Ovary (tissue), 10 donors: ENCODE measurements at regions of chr17 and their contacts with region 1.

Region 1: DNA sequence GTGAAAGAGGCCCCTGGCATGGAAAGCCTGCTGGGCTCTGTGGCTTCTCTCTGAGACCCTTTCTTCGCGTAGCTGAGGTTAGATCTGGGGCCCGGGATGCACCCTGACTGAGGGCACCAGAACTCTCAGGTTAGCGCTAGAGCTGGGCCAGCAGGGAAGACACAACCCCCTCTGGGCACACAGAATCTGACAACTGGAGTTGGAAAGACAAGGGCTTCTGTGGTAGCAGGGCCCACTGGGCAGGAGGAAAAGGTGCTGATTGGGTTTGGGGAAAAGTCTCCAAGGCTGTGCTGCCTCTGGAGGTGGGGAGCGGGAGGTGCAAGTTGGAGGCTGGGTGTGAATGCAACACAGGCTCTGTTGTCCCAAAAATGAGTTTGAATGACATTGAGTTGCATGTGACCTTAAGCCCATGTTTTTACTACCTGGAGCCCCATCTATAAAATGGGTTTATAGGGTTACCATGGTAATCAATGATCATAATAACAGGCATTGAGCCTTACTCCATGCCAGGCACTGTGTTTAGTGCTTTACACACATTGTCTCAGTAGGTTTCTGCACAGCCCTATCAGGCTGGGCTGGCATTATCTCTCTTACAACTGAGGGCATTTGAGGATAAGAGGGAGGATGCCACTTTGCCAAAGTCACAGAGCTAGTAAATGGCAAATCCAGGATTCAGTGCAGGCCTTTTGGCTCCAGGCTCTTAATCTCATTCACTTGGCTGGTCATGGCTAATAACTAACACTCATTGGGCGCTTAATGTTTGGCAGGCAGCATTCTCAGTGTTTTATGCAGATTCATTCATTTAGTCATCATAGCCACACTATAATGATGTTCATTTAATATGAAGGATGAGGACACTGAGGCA is 9.5 kb upstream of the IGFBP4 start:
- DNase-seq: no peak
- H3K4me3 ChIP-seq: no peak overlapping the region
- H3K27ac ChIP-seq: no peak overlapping the region
- H3K4me1 ChIP-seq: no peaks in the 10 kb centered on the region
- H3K27me3 ChIP-seq: no peaks in the 10 kb centered on the region
- CTCF ChIP-seq: peak in 2 of 3 donors; percentile 8 to 20
- EP300 ChIP-seq: no peak
- POLR2A ChIP-seq: no peak

Region 2: GRCh38 chr17:40499551-40500174 is 65.9 kb after region 1 on chr17:
- intact Hi-C with region 1: loop called in 1 of 4 experiments (anchors 5 kb)
- DNase-seq: peak; percentile 82 to 90 (median 84)
- H3K4me3 ChIP-seq: no peak overlapping the region
- H3K27ac ChIP-seq: no peak overlapping the region
- H3K4me1 ChIP-seq: peaks cover 2% of the 10 kb centered on the region
- H3K27me3 ChIP-seq: no peaks in the 10 kb centered on the region
- CTCF ChIP-seq: no peak
- EP300 ChIP-seq: no peak
- POLR2A ChIP-seq: no peak

Region 3: DNA sequence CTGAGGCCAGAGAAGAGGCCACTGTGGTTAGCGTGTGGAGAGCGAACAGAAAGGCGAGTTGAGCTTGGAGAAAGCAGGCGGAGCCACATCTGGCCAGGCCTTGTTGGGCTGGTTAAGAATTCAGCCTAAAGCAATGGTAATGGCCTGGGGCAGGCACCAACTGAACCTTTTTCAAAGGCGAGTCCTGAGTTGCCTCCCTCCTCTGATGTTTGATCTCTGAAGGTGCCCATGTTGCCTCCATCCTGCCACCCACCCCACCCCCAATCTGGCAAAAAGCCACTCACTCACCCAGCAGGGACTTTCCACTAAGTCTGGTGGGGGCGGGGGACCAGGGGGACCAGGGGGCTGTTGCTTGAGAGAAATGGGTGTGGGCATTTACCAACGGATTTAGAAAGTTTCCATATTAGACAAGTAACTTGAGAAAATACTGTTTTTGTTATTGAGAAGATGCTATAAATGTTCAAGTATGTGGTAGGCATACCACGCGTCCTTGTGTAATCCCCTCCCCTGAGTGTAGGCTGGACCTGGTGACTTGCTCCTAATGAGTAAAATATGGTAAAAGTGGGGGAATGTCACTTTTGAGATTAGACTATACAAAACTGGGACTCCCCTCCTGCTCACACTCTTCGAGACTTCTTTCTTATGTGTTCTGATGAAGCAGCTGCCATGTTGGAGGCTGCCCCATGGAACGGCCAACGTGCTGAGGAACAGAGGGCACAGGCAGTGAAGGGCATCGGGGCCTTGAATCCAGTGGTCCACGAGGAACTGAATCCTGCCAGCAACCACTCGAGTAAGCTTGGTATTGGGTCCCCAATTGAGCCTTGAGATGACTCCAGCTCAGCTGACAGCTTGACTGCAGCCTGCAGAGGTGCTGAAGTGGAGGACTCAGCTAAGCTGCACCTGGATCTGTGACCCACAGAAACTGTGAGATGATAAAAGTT is 97.5 kb after region 1 on chr17:
- intact Hi-C with region 1: loop called in 1 of 4 experiments (anchors 5 kb)
- DNase-seq: peak in 3 of 5 donors; percentile 27 to 45 (median 38)
- H3K4me3 ChIP-seq: no peak overlapping the region
- H3K27ac ChIP-seq: no peak overlapping the region
- H3K4me1 ChIP-seq: peaks cover 13% of the 10 kb centered on the region
- H3K27me3 ChIP-seq: no peaks in the 10 kb centered on the region
- CTCF ChIP-seq: no peak
- EP300 ChIP-seq: no peak
- POLR2A ChIP-seq: no peak

Region 4: GRCh38 chr17:40582328-40582901 is 148.6 kb after region 1 on chr17:
- intact Hi-C with region 1: no loop called
- DNase-seq: no peak
- H3K4me3 ChIP-seq: no peak overlapping the region
- H3K27ac ChIP-seq: no peak overlapping the region
- H3K4me1 ChIP-seq: no peaks in the 10 kb centered on the region
- H3K27me3 ChIP-seq: no peaks in the 10 kb centered on the region
- CTCF ChIP-seq: no peak
- EP300 ChIP-seq: no peak
- POLR2A ChIP-seq: no peak

Region 5: GRCh38 chr17:40678902-40679522 is 245.2 kb after region 1 on chr17:
- intact Hi-C with region 1: no loop called
- DNase-seq: no peak
- H3K4me3 ChIP-seq: no peak overlapping the region
- H3K27ac ChIP-seq: no peak overlapping the region
- H3K4me1 ChIP-seq: no peaks in the 10 kb centered on the region
- H3K27me3 ChIP-seq: no peaks in the 10 kb centered on the region
- CTCF ChIP-seq: no peak
- EP300 ChIP-seq: no peak
- POLR2A ChIP-seq: no peak

Region 6: GRCh38 chr17:40967581-40967980 is 533.8 kb after region 1 on chr17:
- intact Hi-C with region 1: no loop called
- DNase-seq: no peak
- H3K4me3 ChIP-seq: no peak overlapping the region
- H3K27ac ChIP-seq: no peak overlapping the region
- H3K4me1 ChIP-seq: no peaks in the 10 kb centered on the region
- H3K27me3 ChIP-seq: no peaks in the 10 kb centered on the region
- CTCF ChIP-seq: no peak
- EP300 ChIP-seq: no peak
- POLR2A ChIP-seq: no peak